ENCODE measurements at regions of chr4 and their contacts with region 1.

Region 1: DNA sequence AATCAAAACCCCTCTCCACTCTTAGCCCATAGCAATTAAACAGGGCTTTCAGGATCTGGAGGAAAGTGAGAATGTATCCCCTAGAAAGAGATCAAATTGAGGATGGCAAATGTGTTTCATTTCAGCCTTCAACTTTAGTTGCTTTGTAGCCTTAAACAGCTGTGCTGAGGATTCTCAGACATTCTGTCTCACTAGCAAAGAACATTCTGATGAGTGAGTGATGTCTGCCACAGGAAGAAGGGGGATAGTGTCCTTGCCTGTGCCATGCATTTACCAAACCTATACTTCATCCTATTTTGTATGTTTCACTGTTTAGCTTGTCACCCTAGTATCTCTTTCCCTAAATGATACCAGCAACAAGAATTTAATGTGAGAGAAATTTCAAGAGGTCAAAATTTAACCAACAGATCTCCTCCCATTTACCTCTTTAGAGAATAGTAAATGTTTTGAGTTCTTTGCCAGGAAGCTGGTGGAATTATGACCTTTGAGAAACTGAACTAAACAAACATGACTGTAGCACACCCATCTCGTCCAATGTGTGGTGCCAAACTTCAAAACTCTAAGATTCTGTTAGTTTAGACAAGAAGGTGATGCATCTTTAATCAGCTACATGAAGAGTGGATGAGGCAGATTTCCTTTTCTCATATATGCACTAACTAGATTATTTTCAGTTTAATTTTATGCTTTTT is 165.6 kb downstream of the PALLD start:
- DNase-seq: no peak
- H3K4me3 ChIP-seq: no peak overlapping the region
- H3K27ac ChIP-seq: no peak overlapping the region
- H3K4me1 ChIP-seq: peaks cover 12% of the 10 kb centered on the region
- H3K27me3 ChIP-seq: no peaks in the 10 kb centered on the region
- CTCF ChIP-seq: no peak

Region 2: DNA sequence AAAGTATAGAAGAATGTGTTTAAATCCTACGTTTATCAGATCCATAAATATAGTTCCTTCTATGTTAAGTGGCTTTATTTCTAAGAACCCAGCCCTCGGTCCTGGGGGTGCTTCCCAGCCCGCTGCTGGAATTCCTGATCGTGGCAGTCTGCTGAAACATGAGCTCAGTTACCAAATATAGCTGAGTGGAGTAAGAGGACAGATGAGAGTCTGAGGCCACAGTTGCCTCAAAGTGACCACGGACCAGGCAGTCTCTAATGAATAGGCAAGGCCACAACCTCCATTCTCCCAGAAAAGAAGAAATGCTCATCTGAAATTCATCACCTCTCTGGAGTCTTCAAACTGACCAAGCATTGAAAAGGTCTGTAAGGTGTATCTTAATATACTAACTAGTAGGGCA is 165.6 kb before region 1 on chr4 and contains the start of gene PALLD:
- CTCF ChIA-PET with region 1: no interaction called
- POLR2A ChIA-PET with region 1: interaction called, 10 read pairs
- intact Hi-C with region 1: no loop called
- DNase-seq: peak in 1 of 2 experiments; percentile 34
- H3K4me3 ChIP-seq: no peak within 1 kb of the TSS
- H3K27ac ChIP-seq: no peak within 1 kb of the TSS
- H3K4me1 ChIP-seq: peaks cover 12% of the 10 kb centered on the region
- H3K27me3 ChIP-seq: no peaks in the 10 kb centered on the region
- CTCF ChIP-seq: no peak
- total RNA-seq, gene PALLD: 139 and 156 TPM in 2 replicates